Activated CD4-positive, alpha-beta memory T cell treated with anti-CD3 and anti-CD28 coated beads for 36 hours (primary cell): ENCODE measurements at regions of chr2 and their contacts with region 1.

Region 1: DNA sequence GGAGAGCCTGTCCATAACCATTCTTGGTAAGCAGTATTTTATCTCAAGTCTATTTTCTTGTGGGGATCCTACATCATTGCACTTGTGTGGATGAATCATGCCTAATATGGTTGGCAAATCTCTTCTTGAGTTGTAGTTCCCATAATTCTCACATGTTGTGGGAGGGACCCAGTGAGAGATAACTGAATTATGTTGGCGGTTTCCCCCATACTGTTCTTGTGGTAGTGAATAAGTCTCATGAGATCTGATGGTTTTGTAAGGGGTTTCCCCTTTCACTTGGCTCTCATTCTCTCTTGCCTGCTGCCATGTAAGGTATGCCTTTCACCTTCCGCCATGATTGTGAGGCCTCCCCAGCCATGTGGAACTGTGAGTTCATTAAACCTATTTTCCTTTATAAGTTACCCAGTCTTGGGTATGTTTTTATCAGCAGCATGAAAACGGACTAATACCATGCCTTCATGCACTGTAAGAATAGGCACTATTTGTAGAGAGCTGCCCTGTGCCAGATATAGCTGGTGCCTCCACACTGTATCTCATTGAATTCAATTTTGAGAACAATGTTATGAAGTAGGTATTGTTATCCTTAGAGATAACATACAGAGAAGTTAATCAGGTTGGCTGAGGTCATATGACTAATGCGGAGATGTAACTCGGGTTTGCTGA is 148.3 kb downstream of the PLCL1 start:
- DNase-seq: peak; percentile 37
- H3K4me3 Mint-ChIP-seq: no peak overlapping the region
- H3K27ac Mint-ChIP-seq: no peak overlapping the region
- H3K4me1 Mint-ChIP-seq: peaks cover 46% of the 10 kb centered on the region
- H3K27me3 Mint-ChIP-seq: no peaks in the 10 kb centered on the region

Region 2: DNA sequence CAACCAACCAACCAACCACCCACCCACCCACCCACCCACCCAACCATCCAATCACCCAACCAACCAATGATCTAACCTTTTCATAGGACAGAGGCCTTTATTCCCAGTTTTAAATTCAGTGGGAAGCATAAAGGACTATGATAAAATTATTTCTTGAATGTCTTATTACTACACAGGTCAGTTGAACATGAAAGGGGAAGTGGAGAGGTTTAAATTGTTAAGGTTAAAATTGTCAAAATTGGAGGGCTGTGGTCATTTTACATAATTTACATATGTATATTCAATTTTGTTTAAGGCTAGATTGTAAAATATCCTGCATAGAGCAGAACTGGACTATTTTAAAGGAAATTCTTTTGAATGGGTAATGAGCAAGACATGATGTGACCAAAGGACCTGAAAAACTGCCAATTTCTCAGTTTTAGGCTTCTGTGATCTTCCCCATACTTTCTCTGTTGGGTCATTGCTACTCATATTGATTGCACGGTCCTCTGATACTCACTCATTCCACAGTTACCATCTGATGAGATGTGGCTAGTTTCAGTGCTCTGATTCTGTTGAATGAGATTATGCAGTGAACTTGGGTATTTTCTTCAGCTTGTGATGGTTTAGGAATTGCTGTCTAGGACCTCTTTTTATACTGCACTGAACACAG is 20.9 kb before region 1 on chr2:
- CTCF ChIA-PET with region 1: no interaction called
- POLR2A ChIA-PET with region 1: no interaction called
- intact Hi-C with region 1: loop called (anchors 1 kb)
- DNase-seq: no peak
- H3K4me3 Mint-ChIP-seq: no peak overlapping the region
- H3K27ac Mint-ChIP-seq: no peak overlapping the region
- H3K4me1 Mint-ChIP-seq: peaks cover 46% of the 10 kb centered on the region
- H3K27me3 Mint-ChIP-seq: no peaks in the 10 kb centered on the region

Region 3: GRCh38 chr2:197940382-197940781 is 12.3 kb before region 1 on chr2:
- CTCF ChIA-PET with region 1: interaction called, 3 read pairs
- POLR2A ChIA-PET with region 1: no interaction called
- intact Hi-C with region 1: loop called (anchors 1 kb)
- DNase-seq: no peak
- H3K4me3 Mint-ChIP-seq: no peak overlapping the region
- H3K27ac Mint-ChIP-seq: no peak overlapping the region
- H3K4me1 Mint-ChIP-seq: peaks cover 46% of the 10 kb centered on the region
- H3K27me3 Mint-ChIP-seq: no peaks in the 10 kb centered on the region

Region 4: DNA sequence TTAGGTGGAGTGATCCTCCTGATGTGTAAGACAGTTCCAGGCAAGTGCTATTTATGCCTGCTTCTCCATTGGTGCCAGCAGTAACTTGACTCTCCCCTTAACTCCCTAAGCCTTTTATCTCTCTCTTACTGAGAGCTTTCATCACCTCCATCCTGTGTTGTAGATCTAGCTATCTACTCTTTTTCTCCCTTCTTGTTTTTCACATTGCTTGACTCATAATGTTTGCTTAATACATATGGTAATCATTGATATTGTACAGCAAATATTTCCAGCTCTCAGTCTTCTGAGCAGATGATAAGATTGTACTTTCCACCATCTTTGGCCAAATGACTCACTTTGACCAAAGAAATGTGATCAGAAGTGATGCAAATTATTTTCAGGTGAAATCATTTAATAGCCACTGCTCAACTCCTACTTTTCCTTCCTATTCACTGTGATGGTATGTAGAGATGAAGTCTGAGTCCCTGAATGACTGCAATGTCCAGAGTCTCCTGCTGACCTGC is 16.8 kb after region 1 on chr2:
- CTCF ChIA-PET with region 1: no interaction called
- POLR2A ChIA-PET with region 1: no interaction called
- intact Hi-C with region 1: loop called (anchors 2 kb)
- DNase-seq: no peak
- H3K4me3 Mint-ChIP-seq: no peak overlapping the region
- H3K27ac Mint-ChIP-seq: no peak overlapping the region
- H3K4me1 Mint-ChIP-seq: peaks cover 20% of the 10 kb centered on the region
- H3K27me3 Mint-ChIP-seq: no peaks in the 10 kb centered on the region

Region 5: DNA sequence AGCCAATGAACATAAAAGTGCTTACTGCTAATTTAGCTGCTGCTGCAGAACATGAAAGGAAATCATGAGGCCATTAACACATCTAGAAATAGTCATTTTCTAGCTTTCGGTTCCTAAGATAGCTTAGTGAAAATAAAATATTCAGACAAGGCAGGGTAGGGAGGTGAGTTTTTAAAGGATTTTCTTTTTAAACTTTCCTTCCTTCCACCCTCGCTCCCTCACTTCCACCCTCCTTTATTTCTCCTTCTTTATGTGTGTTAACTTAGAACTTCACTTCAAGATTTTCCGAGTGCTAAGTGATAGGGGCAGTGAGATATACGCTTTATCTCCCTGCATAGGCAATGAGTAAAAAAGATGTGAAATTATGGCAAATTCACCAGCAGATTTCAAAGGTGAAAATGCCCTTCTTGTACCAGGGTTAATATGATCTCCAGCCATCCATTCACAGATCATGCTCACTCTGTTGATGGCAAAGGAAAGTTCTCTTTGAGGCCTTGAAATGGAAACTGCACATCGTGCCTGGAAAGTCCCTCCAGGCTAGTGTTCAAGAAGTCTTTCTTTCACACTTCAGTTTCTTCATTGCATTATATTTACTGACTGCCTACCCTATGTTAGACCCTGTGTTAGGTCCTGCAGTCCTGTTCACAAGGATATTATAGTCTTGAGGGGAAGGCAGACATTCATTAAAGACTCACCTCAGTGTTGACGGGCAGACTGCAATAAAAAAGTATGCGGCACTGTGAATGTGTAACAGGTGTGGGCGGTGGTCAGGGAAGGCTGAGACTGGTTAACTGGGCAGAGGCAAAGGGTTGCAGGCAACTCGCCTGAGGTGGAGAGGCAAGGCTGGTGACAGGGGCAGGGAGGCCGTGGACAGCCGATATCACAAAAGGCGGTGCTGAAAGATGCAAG is 52.5 kb after region 1 on chr2:
- CTCF ChIA-PET with region 1: no interaction called
- POLR2A ChIA-PET with region 1: no interaction called
- intact Hi-C with region 1: loop called (anchors 1 kb)
- DNase-seq: peak; percentile 62
- H3K4me3 Mint-ChIP-seq: peak overlapping the region; percentile 61
- H3K27ac Mint-ChIP-seq: peak overlapping the region; percentile 84
- H3K4me1 Mint-ChIP-seq: peaks cover 56% of the 10 kb centered on the region
- H3K27me3 Mint-ChIP-seq: no peaks in the 10 kb centered on the region

Region 6: GRCh38 chr2:198042189-198042588 is 89.5 kb after region 1 on chr2:
- CTCF ChIA-PET with region 1: no interaction called
- POLR2A ChIA-PET with region 1: no interaction called
- intact Hi-C with region 1: loop called (anchors 5 kb)
- DNase-seq: no peak
- H3K4me3 Mint-ChIP-seq: no peak overlapping the region
- H3K27ac Mint-ChIP-seq: no peak overlapping the region
- H3K4me1 Mint-ChIP-seq: peaks cover 24% of the 10 kb centered on the region
- H3K27me3 Mint-ChIP-seq: no peaks in the 10 kb centered on the region